ENCODE measurements at regions of chr19 and their contacts with region 1.

Region 1: GRCh38 chr19:41263850-41264580 is at the start of gene HNRNPUL1:
- DNase-seq: peak; percentile 99
- ATAC-seq: peak; percentile 70
- H3K4me3 Mint-ChIP-seq: peak within 1 kb of the TSS; percentile 95
- H3K27ac Mint-ChIP-seq: peak within 1 kb of the TSS; percentile 100
- H3K4me1 Mint-ChIP-seq: peaks cover 34% of the 10 kb centered on the region
- H3K27me3 Mint-ChIP-seq: no peaks in the 10 kb centered on the region
- total RNA-seq, gene HNRNPUL1: 263 to 312 TPM

Region 2: DNA sequence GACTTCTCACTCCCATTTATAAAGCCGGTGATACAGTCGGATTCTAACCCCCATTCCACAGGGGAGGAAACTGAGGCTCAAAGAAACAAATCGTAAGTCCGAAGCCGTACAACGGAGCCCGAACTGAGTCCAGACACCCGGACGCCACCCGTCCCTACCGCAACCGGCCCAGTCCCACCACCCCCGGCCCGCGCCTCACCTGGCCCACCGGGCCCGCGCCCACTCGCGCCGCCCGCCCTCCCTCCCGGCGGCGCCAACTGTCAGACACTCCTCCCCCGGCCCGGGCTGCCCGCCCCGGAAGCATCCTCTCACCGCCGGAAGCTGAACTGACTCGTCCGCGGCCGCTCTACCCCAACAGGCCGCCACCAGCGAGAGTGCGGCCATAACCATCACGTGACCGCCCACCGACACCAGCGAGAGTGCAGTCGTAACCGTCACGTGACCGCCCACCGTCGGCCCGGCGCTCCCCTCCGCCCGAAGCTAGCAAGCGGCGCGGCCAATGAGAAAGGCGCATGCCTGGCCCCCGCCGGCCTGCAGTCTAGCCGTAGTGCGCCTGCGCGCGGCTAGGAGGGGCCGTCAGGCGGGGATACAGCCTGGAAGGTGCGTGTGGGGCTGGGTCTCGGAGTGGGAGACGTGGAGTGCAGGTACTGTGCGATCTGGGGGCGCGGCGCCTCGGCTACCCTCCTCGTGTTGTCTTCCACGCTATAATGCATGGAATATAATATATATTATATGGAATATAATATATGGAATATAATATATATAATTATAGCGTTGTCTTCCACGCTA is 915.7 kb before region 1 on chr19 and contains the starts of genes C19orf47 and PLD3:
- CTCF ChIA-PET with region 1: no interaction called
- POLR2A ChIA-PET with region 1: no interaction called
- intact Hi-C with region 1: loop called in 1 of 2 experiments (anchors 5 kb)
- DNase-seq: peak; percentile 100
- ATAC-seq: peak; percentile 97
- H3K4me3 Mint-ChIP-seq: peak within 1 kb of the TSS; percentile 96
- H3K27ac Mint-ChIP-seq: peak within 1 kb of the TSS; percentile 91
- H3K4me1 Mint-ChIP-seq: peaks cover 26% of the 10 kb centered on the region
- H3K27me3 Mint-ChIP-seq: no peaks in the 10 kb centered on the region
- total RNA-seq, gene C19orf47: 15.8 to 17.7 TPM
- total RNA-seq, gene PLD3: 57.8 to 69.1 TPM

Region 3: GRCh38 chr19:40716655-40717324 is 547.2 kb before region 1 on chr19 and contains the starts of genes COQ8B and ITPKC:
- CTCF ChIA-PET with region 1: interaction called, 6 read pairs
- POLR2A ChIA-PET with region 1: interaction called, 5 read pairs
- intact Hi-C with region 1: loop called in 1 of 2 experiments (anchors 1 kb)
- DNase-seq: peak; percentile 100
- ATAC-seq: peak; percentile 65
- H3K4me3 Mint-ChIP-seq: peak within 1 kb of the TSS; percentile 93
- H3K27ac Mint-ChIP-seq: peak within 1 kb of the TSS; percentile 98
- H3K4me1 Mint-ChIP-seq: peaks cover 59% of the 10 kb centered on the region
- H3K27me3 Mint-ChIP-seq: no peaks in the 10 kb centered on the region
- total RNA-seq, gene COQ8B: 21.2 to 29.9 TPM
- total RNA-seq, gene ITPKC: 4.6 to 5.6 TPM

Region 4: GRCh38 chr19:41023193-41023592 is 240.8 kb before region 1 on chr19:
- CTCF ChIA-PET with region 1: no interaction called
- POLR2A ChIA-PET with region 1: no interaction called
- intact Hi-C with region 1: no loop called
- DNase-seq: no peak
- ATAC-seq: no peak
- H3K4me3 Mint-ChIP-seq: no peak overlapping the region
- H3K27ac Mint-ChIP-seq: no peak overlapping the region
- H3K4me1 Mint-ChIP-seq: no peaks in the 10 kb centered on the region
- H3K27me3 Mint-ChIP-seq: peaks cover 26% of the 10 kb centered on the region

Region 5: GRCh38 chr19:41123716-41124294 is 140.2 kb before region 1 on chr19:
- CTCF ChIA-PET with region 1: interaction called, 5 read pairs
- POLR2A ChIA-PET with region 1: interaction called, 4 read pairs
- intact Hi-C with region 1: loop called in 1 of 2 experiments (anchors 1 kb)
- DNase-seq: no peak
- ATAC-seq: no peak
- H3K4me3 Mint-ChIP-seq: no peak overlapping the region
- H3K27ac Mint-ChIP-seq: no peak overlapping the region
- H3K4me1 Mint-ChIP-seq: peaks cover 25% of the 10 kb centered on the region
- H3K27me3 Mint-ChIP-seq: no peaks in the 10 kb centered on the region

Region 6: DNA sequence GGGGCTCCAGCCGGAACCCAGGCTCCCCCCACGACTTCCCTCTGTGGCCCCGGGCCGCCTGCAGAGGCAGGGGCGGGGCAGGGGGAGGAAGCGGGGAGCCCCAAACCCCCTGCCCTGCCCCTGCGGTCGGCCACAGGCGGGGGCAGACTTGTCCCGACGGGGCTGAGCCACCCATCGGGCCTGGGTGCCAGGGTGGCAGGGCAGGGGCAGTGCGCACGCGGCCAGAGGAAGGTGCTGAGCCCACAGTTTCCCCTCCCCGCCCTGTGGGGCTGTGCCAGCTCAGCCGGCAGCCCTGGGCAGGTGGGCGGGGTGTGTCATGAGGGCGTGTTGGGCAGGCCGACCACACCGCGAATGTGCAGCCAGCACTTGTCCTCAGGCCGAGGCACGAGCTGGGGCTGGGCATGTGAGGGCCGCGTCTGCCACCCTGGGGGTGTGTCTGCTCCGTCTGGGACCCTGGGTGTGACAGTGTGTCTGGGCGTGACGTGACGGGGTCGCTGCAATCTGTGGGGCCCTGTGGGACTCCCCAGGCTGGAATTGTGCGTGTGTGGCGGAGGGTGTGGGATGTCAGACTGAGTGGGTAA is 63.7 kb after region 1 on chr19:
- CTCF ChIA-PET with region 1: interaction called, 3 read pairs
- POLR2A ChIA-PET with region 1: interaction called, 6 read pairs
- intact Hi-C with region 1: loop called in 1 of 2 experiments (anchors 1 kb)
- DNase-seq: peak; percentile 93
- ATAC-seq: peak; percentile 75
- H3K4me3 Mint-ChIP-seq: peak overlapping the region; percentile 63
- H3K27ac Mint-ChIP-seq: peak overlapping the region; percentile 96
- H3K4me1 Mint-ChIP-seq: peaks cover 55% of the 10 kb centered on the region
- H3K27me3 Mint-ChIP-seq: no peaks in the 10 kb centered on the region

Region 7: DNA sequence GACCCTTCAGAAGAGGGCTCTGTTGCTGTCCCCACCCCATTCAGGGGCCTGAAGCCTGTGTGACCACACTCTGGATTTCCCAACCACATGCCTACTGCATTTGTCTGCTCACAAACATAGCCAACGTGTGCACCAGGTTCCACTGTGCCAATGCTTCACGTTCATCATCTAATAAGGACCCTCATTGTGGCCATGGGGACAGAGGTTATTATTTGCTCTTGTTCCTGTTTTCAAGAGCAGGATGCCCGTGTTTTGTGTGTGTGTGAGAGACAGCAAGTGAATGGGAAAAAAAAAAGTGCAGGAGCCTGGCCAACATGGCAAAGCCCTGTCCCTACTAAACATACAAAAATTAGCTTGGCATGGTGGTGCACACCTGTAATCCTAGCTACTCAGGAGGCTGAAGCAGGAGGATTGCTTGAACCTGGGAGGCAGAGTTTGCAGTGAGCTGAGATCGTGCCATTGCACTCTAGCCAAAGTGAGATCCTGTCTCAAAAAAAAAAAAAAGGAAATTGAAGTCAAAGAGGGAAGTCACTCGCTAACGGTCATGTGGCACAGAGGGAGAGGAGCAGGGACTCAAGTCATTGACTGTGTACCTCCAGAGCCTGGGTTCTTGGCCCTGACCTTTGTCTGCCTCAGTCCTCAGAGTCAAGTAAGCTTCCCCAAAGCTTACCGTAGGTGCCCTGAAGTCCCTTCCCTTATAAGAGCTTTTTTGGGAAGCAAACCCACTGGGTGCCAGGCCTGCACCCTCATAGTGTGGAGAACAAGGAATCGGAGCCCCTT is 156.3 kb after region 1 on chr19:
- CTCF ChIA-PET with region 1: no interaction called
- POLR2A ChIA-PET with region 1: no interaction called
- intact Hi-C with region 1: no loop called
- DNase-seq: no peak
- ATAC-seq: no peak
- H3K4me3 Mint-ChIP-seq: no peak overlapping the region
- H3K27ac Mint-ChIP-seq: no peak overlapping the region
- H3K4me1 Mint-ChIP-seq: no peaks in the 10 kb centered on the region
- H3K27me3 Mint-ChIP-seq: no peaks in the 10 kb centered on the region

Region 8: DNA sequence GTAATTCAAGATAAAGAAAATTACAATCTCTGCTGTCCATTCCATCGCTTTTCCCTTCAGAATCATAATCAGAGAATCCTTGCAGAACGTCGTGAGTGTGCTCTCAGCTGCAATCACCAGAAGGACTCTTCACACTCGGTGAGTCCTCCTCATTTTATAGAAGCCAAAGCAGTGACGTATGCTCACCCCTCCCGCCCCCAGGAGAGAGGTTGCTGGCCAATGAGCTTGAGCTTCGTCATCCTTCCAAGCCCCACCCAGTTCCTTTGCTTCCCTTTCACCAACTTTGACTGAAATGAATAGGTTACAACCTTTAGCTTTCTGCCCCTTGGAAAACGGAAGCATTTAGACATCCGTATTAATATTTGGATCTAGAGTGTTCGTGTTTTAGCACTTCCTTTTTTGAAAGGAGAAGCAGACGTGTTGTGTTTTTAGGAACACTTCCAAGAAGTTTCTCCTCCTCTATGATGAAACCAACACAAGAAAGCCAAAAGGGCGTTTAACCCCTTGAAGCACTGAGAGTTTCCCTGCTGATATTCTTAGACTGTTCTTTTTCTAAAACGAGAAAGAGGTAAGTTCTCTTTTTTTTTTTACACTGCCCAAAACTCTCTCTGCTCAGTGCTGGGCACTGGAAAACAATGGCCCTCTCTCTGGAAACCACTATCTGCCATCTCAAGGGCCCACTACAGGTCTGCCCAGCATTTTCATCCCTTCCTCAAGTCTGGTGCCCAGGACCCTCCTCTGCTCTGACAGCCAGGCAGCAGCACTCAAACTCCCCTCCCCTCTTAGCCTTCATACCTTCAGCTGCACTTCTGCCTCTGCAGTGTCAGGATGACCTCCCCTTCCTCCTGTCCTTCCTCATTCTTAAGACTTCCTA is 267.7 kb after region 1 on chr19:
- CTCF ChIA-PET with region 1: no interaction called
- POLR2A ChIA-PET with region 1: interaction called, 5 read pairs
- intact Hi-C with region 1: loop called in 1 of 2 experiments (anchors 5 kb)
- DNase-seq: peak; percentile 91
- ATAC-seq: peak; percentile 85
- H3K4me3 Mint-ChIP-seq: peak overlapping the region; percentile 76
- H3K27ac Mint-ChIP-seq: peak overlapping the region; percentile 65
- H3K4me1 Mint-ChIP-seq: peaks cover 60% of the 10 kb centered on the region
- H3K27me3 Mint-ChIP-seq: no peaks in the 10 kb centered on the region

Region 9: GRCh38 chr19:42075616-42076379 is 811.8 kb after region 1 on chr19 and contains the start of gene ZNF574:
- CTCF ChIA-PET with region 1: no interaction called
- POLR2A ChIA-PET with region 1: no interaction called
- intact Hi-C with region 1: loop called in 1 of 2 experiments (anchors 5 kb)
- DNase-seq: peak; percentile 99
- ATAC-seq: peak; percentile 99
- H3K4me3 Mint-ChIP-seq: peak within 1 kb of the TSS; percentile 89
- H3K27ac Mint-ChIP-seq: peak within 1 kb of the TSS; percentile 99
- H3K4me1 Mint-ChIP-seq: peaks cover 27% of the 10 kb centered on the region
- H3K27me3 Mint-ChIP-seq: no peaks in the 10 kb centered on the region
- total RNA-seq, gene ZNF574: 10.7 to 14.8 TPM